ENCODE measurements at regions of chr6 and their contacts with region 1.

Region 1: DNA sequence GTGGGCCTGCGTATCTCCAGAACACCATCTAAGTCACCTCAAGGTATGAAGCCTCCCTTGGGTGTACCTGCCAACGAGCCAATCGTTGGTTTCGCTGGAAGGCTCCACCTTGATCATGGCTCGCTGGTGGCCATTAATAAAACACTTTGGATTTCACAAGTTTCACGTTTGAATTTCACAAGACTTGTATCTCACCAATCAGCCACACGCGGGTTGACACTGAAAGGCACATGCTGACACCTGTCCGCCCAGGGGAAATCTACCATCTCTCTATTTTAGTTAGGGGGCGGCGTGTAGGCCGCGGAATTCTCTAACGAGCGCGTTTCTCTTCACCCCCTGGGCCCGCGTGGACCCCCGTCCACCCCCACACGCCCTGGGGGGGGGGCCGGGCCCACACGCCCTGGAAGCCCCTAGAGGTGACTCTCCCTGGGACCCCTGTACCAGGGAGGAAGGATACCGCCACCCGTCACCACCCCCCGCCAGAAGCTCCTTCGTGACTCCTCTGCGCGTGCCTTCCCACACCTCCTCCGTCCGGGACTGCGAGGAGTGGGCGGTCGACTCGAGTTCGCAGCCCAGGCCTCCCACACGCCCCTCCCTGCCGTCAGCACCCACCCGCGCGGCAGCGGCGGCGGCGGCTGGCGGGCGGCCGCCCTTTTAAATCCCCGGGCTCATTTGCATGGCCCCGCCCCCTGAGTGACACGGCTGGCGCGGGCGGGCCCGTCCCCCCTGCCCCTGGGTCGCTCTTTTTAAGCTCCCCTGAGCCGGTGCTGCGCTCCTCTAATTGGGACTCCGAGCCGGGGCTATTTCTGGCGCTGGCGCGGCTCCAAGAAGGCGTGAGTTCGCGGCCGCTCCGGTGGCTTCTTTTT is at the start of gene HMGA1:
- DNase-seq: peak; percentile 74 to 91 (median 83)
- ATAC-seq: peak; percentile 84
- H3K4me3 ChIP-seq: peak within 1 kb of the TSS; percentile 66
- H3K4me3 Mint-ChIP-seq: peak within 1 kb of the TSS; percentile 88 to 96 (median 94)
- H3K27ac ChIP-seq: peak within 1 kb of the TSS; percentile 99
- H3K27ac Mint-ChIP-seq: peak within 1 kb of the TSS; percentile 89 to 99 (median 98)
- H3K4me1 ChIP-seq: peaks cover 13 to 15% of the 10 kb centered on the region in 2 donors
- H3K4me1 Mint-ChIP-seq: peaks cover 16 to 43% (median 34%) of the 10 kb centered on the region in 7 donors
- H3K27me3 ChIP-seq: no peaks in the 10 kb centered on the region
- H3K27me3 Mint-ChIP-seq: no peaks in the 10 kb centered on the region
- total RNA-seq, gene HMGA1: 90.0 to 180 (median 95.3) TPM

Region 2: GRCh38 chr6:32843979-32844838 is 1392.2 kb before region 1 on chr6 and contains the start of gene PSMB8:
- CTCF ChIA-PET with region 1: no interaction called
- POLR2A ChIA-PET with region 1: no interaction called
- intact Hi-C with region 1: loop called in 1 of 2 experiments (anchors 5 kb)
- DNase-seq: peak; percentile 92 to 99 (median 97)
- ATAC-seq: peak; percentile 90
- H3K4me3 ChIP-seq: peak within 1 kb of the TSS; percentile 97
- H3K4me3 Mint-ChIP-seq: peak within 1 kb of the TSS; percentile 92 to 99 (median 98)
- H3K27ac ChIP-seq: peak within 1 kb of the TSS; percentile 97
- H3K27ac Mint-ChIP-seq: peak within 1 kb of the TSS; percentile 99 to 100 (median 100)
- H3K4me1 ChIP-seq: peaks cover 71 to 72% of the 10 kb centered on the region in 2 donors
- H3K4me1 Mint-ChIP-seq: peaks cover 66 to 83% (median 79%) of the 10 kb centered on the region in 7 donors
- H3K27me3 ChIP-seq: no peaks in the 10 kb centered on the region
- H3K27me3 Mint-ChIP-seq: no peaks in the 10 kb centered on the region
- total RNA-seq, gene PSMB8: 111 to 419 (median 115) TPM

Region 3: GRCh38 chr6:33570806-33571636 is 665.3 kb before region 1 on chr6:
- CTCF ChIA-PET with region 1: no interaction called
- POLR2A ChIA-PET with region 1: no interaction called
- intact Hi-C with region 1: loop called in 1 of 2 experiments (anchors 5 kb)
- DNase-seq: peak; percentile 81 to 98 (median 95)
- ATAC-seq: peak; percentile 91
- H3K4me3 ChIP-seq: peak overlapping the region; percentile 85
- H3K4me3 Mint-ChIP-seq: peak overlapping the region; percentile 80 to 99 (median 94)
- H3K27ac ChIP-seq: peak overlapping the region; percentile 98
- H3K27ac Mint-ChIP-seq: peak overlapping the region; percentile 99 to 100 (median 100)
- H3K4me1 ChIP-seq: peaks cover 19 to 21% of the 10 kb centered on the region in 2 donors
- H3K4me1 Mint-ChIP-seq: peaks cover 8 to 57% (median 31%) of the 10 kb centered on the region in 7 donors
- H3K27me3 ChIP-seq: no peaks in the 10 kb centered on the region
- H3K27me3 Mint-ChIP-seq: peaks cover 0 to 3% (median 0%) of the 10 kb centered on the region in 5 donors

Region 4: DNA sequence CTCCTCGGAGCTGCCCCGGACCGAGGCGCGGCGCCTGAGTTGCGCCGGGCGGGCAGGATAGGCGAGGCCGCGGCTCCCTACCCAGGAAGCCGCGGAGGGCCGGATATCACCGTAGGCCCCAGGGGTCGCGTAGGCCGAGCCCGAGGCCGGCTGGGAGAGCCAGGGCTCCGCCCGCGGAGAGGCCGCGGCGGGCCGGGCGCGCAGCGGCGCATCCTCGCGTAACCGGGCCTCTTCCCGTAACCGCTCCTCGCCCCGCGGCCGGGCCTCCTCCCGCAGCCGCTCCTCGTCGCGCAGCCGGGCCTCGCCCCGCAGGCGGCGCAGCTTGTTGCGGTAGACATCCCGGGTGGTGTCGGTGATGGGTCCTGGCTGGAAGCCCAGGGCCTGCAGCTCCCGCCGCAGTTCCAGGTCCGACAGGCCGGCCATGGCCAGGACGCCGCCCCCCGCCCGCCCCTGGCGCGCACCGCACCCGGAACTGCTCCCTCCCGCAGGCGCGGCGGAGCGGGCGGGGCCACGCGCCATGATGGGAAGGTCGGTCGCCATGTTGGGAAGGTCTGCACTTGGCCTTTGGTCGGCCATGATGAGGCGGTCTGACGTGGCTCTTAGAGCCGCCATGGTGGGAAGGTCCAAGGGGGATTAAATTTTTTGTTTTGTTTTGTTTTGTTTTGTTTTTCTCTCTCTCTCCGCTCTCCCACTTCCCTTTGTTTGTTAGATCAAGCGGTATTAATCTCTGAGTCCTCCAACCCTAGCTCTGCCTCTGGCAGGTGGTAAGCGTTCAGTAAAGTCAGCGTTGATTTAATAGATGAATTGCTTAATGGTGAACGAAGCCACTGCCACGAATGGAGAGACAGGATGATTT is 447.4 kb before region 1 on chr6 and contains the start of gene LEMD2:
- CTCF ChIA-PET with region 1: no interaction called
- POLR2A ChIA-PET with region 1: no interaction called
- intact Hi-C with region 1: loop called in 1 of 2 experiments (anchors 5 kb)
- DNase-seq: peak; percentile 88 to 96 (median 91)
- ATAC-seq: peak; percentile 94
- H3K4me3 ChIP-seq: peak within 1 kb of the TSS; percentile 80
- H3K4me3 Mint-ChIP-seq: peak within 1 kb of the TSS; percentile 93 to 100 (median 98)
- H3K27ac ChIP-seq: peak within 1 kb of the TSS; percentile 92
- H3K27ac Mint-ChIP-seq: peak within 1 kb of the TSS; percentile 95 to 99 (median 97)
- H3K4me1 ChIP-seq: peaks cover 37 to 40% of the 10 kb centered on the region in 2 donors
- H3K4me1 Mint-ChIP-seq: peaks cover 40 to 55% (median 51%) of the 10 kb centered on the region in 7 donors
- H3K27me3 ChIP-seq: no peaks in the 10 kb centered on the region
- H3K27me3 Mint-ChIP-seq: peaks cover 0 to 25% (median 0%) of the 10 kb centered on the region in 5 donors
- total RNA-seq, gene LEMD2: 71.4 to 124 (median 118) TPM

Region 5: GRCh38 chr6:34145161-34146020 is 91.0 kb before region 1 on chr6:
- CTCF ChIA-PET with region 1: no interaction called
- POLR2A ChIA-PET with region 1: no interaction called
- intact Hi-C with region 1: no loop called
- DNase-seq: peak in 7 of 9 donors; percentile 26 to 40 (median 33)
- ATAC-seq: peak; percentile 55
- H3K4me3 ChIP-seq: peak overlapping the region; percentile 27
- H3K4me3 Mint-ChIP-seq: peak overlapping the region; percentile 45 to 83 (median 74)
- H3K27ac ChIP-seq: no peak overlapping the region
- H3K27ac Mint-ChIP-seq: no peak overlapping the region
- H3K4me1 ChIP-seq: peaks cover 15 to 26% of the 10 kb centered on the region in 2 donors
- H3K4me1 Mint-ChIP-seq: peaks cover 0 to 30% (median 16%) of the 10 kb centered on the region in 7 donors
- H3K27me3 ChIP-seq: peaks cover 4 to 38% of the 10 kb centered on the region in 2 donors
- H3K27me3 Mint-ChIP-seq: peaks cover 40 to 78% (median 55%) of the 10 kb centered on the region in 5 donors

Region 6: GRCh38 chr6:34223956-34224940 is 12.1 kb before region 1 on chr6:
- CTCF ChIA-PET with region 1: interaction called, 6 read pairs
- POLR2A ChIA-PET with region 1: interaction called, 45 read pairs
- intact Hi-C with region 1: loop called (anchors 1 kb)
- DNase-seq: peak; percentile 85 to 97 (median 91)
- ATAC-seq: peak; percentile 99
- H3K4me3 ChIP-seq: peak overlapping the region; percentile 78
- H3K4me3 Mint-ChIP-seq: peak overlapping the region; percentile 42 to 85 (median 76)
- H3K27ac ChIP-seq: peak overlapping the region; percentile 93
- H3K27ac Mint-ChIP-seq: peak overlapping the region; percentile 82 to 95 (median 88)
- H3K4me1 ChIP-seq: peaks cover 4 to 14% of the 10 kb centered on the region in 2 donors
- H3K4me1 Mint-ChIP-seq: peaks cover 5 to 40% (median 10%) of the 10 kb centered on the region in 7 donors
- H3K27me3 ChIP-seq: no peaks in the 10 kb centered on the region
- H3K27me3 Mint-ChIP-seq: no peaks in the 10 kb centered on the region

Region 7: DNA sequence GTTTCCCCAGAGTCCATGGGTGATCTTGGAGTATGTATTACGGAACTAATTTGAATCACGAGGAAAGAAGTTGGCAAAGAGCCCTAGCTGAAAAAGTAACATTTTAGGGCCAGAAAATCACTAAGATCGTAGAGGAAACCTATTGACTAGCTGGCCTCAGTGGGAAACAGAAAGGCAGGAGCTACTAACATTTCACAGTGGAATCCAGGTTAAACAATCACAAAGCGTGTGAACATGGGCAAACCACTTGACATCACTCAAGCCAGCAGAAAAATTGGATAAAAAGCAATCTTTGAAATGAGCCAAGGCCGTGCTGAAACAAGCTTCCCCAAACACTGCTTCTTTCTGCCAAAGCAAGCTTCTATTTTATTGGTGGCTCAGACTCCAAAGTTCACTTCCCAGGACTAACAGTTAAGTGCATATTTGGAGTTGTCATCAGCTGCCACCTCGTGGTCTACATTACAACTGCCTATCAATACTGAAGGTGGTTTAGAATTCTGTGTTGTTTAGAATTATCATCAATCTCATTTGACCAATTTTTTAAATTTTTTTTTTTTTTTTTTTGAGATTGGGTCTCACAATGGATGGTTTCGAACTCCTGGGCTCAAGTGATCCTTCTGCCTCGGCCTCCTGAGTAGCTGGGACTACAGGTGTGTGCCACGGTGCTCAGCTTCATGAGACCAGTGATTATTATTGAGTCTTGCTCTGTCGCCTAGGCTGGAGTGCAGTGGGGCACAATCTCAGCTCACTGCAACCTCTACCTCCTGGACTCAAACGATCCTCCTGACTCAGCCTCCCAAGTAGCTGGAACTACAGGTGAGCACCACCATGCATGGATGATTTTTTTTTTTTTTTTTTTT is 178.9 kb after region 1 on chr6:
- CTCF ChIA-PET with region 1: interaction called, 7 read pairs
- POLR2A ChIA-PET with region 1: interaction called, 14 read pairs
- intact Hi-C with region 1: no loop called
- DNase-seq: peak in 7 of 9 donors; percentile 38 to 63 (median 56)
- ATAC-seq: peak; percentile 88
- H3K4me3 ChIP-seq: no peak overlapping the region
- H3K4me3 Mint-ChIP-seq: no peak overlapping the region
- H3K27ac ChIP-seq: no peak overlapping the region
- H3K27ac Mint-ChIP-seq: peak overlapping the region in 4 of 9 donors; percentile 17 to 56 (median 45)
- H3K4me1 ChIP-seq: no peaks in the 10 kb centered on the region
- H3K4me1 Mint-ChIP-seq: peaks cover 0 to 17% (median 9%) of the 10 kb centered on the region in 7 donors
- H3K27me3 ChIP-seq: no peaks in the 10 kb centered on the region
- H3K27me3 Mint-ChIP-seq: no peaks in the 10 kb centered on the region

Region 8: GRCh38 chr6:34791701-34792235 is 555.4 kb after region 1 on chr6 and contains the start of gene BLTP3A:
- CTCF ChIA-PET with region 1: no interaction called
- POLR2A ChIA-PET with region 1: no interaction called
- intact Hi-C with region 1: loop called in 1 of 2 experiments (anchors 2 kb)
- DNase-seq: peak; percentile 60 to 85 (median 73)
- ATAC-seq: peak; percentile 97
- H3K4me3 ChIP-seq: peak within 1 kb of the TSS; percentile 100
- H3K4me3 Mint-ChIP-seq: peak within 1 kb of the TSS; percentile 92 to 100 (median 98)
- H3K27ac ChIP-seq: peak within 1 kb of the TSS; percentile 79
- H3K27ac Mint-ChIP-seq: peak within 1 kb of the TSS; percentile 88 to 97 (median 96)
- H3K4me1 ChIP-seq: peaks cover 8 to 15% of the 10 kb centered on the region in 2 donors
- H3K4me1 Mint-ChIP-seq: peaks cover 24 to 38% (median 30%) of the 10 kb centered on the region in 7 donors
- H3K27me3 ChIP-seq: no peaks in the 10 kb centered on the region
- H3K27me3 Mint-ChIP-seq: no peaks in the 10 kb centered on the region
- total RNA-seq, gene BLTP3A: 10.7 to 12.9 (median 11.9) TPM